ENCODE measurements at regions of chrX and their contacts with region 1.

Region 1: DNA sequence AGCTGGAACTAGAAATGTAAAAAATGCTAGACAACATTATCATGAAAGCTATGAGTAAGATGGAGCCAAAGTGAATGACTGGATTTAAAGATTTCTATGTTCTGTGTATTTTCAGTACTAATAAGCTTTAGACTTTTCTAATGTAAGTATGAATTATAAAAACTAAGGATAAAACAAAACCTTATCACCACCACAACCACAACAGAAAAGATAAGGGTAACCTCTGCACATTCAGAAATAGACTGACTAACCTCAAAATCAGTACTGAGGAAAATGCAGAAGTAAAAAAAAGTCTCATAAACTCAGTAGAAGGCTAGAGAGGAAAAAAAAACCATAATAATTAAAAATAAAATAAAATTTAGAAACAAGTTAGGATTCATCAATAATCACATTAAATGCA is 14.9 kb upstream of the UBE2NL start:
- DNase-seq: no peak
- ATAC-seq: no peak
- H3K4me3 ChIP-seq: no peak overlapping the region
- H3K27ac ChIP-seq: no peak overlapping the region
- H3K4me1 ChIP-seq: no peaks in the 10 kb centered on the region
- H3K27me3 ChIP-seq: no peaks in the 10 kb centered on the region
- CTCF ChIP-seq: no peak

Region 2: GRCh38 chrX:143094417-143095110 is 774.5 kb before region 1 on chrX:
- intact Hi-C with region 1: no loop called
- DNase-seq: no peak
- ATAC-seq: no peak
- H3K4me3 ChIP-seq: no peak overlapping the region
- H3K27ac ChIP-seq: no peak overlapping the region
- H3K4me1 ChIP-seq: no peaks in the 10 kb centered on the region
- H3K27me3 ChIP-seq: no peaks in the 10 kb centered on the region
- CTCF ChIP-seq: no peak

Region 3: GRCh38 chrX:143674926-143675325 is 194.1 kb before region 1 on chrX:
- intact Hi-C with region 1: loop called in 1 of 3 experiments (anchors 5 kb)
- DNase-seq: no peak
- ATAC-seq: no peak
- H3K4me3 ChIP-seq: no peak overlapping the region
- H3K27ac ChIP-seq: no peak overlapping the region
- H3K4me1 ChIP-seq: no peaks in the 10 kb centered on the region
- H3K27me3 ChIP-seq: peaks cover 0 to 11% (median 4%) of the 10 kb centered on the region in 4 donors
- CTCF ChIP-seq: no peak

Measured in pancreas (tissue), 10 donors.